CD4-positive, alpha-beta T cell (primary cell): ENCODE measurements at regions of chr7 and their contacts with region 1.

Region 1: DNA sequence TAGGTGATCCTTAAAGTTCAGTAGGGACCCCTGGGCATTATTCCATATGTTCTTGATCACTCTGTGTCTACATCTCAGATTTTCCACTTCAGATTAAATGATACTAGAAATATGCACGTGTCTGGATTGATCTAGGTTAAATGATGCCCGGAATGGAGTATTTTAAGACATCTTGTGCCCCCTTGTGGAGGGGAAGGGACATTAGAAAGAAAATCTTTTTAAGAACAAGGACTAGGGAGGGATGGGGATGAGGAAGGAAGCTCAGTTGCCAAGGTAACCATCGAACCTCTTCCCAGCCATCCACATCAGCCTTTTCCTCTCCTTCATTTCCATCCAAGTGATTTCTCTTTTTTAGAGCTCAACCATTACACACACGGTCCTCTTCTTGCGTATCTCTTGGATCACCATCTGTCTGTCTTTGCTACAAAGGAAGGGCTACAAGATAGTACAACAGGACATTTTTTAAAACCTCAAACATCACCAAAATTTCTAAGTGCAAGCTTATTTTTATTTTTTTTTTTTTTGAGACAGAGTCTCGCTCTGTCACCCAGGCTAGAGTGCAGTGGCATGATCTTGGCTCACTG is 40.5 kb downstream of the PRSS2 start:
- DNase-seq: peak in 4 of 14 experiments; percentile 59 to 87 (median 86)
- ATAC-seq: no peak
- H3K4me3 ChIP-seq: no peak overlapping the region
- H3K4me3 Mint-ChIP-seq: peak overlapping the region; percentile 62
- H3K27ac ChIP-seq: peak overlapping the region; percentile 95 to 99
- H3K27ac Mint-ChIP-seq: peak overlapping the region; percentile 98
- H3K4me1 ChIP-seq: peaks cover 77% of the 10 kb centered on the region
- H3K4me1 Mint-ChIP-seq: peaks cover 99% of the 10 kb centered on the region
- H3K27me3 ChIP-seq: no peaks in the 10 kb centered on the region
- H3K27me3 Mint-ChIP-seq: no peaks in the 10 kb centered on the region
- CTCF ChIP-seq: peak; percentile 78

Region 2: GRCh38 chr7:142301923-142302550 is 509.2 kb before region 1 on chr7:
- CTCF ChIA-PET with region 1: interaction called, 5 read pairs
- POLR2A ChIA-PET with region 1: interaction called, 87 read pairs
- intact Hi-C with region 1: loop called (anchors 5 kb)
- DNase-seq: peak in 3 of 14 experiments; percentile 29 to 38 (median 33)
- ATAC-seq: no peak
- H3K4me3 ChIP-seq: no peak overlapping the region
- H3K4me3 Mint-ChIP-seq: no peak overlapping the region
- H3K27ac ChIP-seq: no peak overlapping the region
- H3K27ac Mint-ChIP-seq: no peak overlapping the region
- H3K4me1 ChIP-seq: peaks cover 12% of the 10 kb centered on the region
- H3K4me1 Mint-ChIP-seq: peaks cover 40% of the 10 kb centered on the region
- H3K27me3 ChIP-seq: no peaks in the 10 kb centered on the region
- H3K27me3 Mint-ChIP-seq: peaks cover 24% of the 10 kb centered on the region
- CTCF ChIP-seq: peak; percentile 16

Region 3: DNA sequence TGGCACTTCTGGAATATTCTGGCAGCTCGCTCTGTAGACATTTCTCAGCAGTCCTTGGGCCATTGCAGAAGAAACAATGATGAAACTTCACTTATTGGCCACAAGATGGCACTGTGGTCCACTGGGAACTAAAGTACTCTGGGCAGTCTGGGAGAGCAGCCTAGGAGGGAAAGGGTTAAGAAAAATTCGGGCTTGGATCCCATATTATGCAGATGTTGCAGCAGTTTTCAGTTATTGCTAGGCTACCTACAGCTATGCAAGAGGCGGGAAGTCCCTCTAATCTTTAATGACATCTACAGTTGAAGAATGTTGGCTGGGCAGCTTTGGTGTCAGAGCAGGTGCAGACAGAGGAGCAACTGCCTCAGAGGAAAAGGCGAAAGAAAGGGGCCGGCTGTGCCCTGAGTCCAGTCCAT is 351.7 kb before region 1 on chr7:
- CTCF ChIA-PET with region 1: no interaction called
- POLR2A ChIA-PET with region 1: interaction called, 59 read pairs
- intact Hi-C with region 1: no loop called
- DNase-seq: peak in 4 of 14 experiments; percentile 49 to 77 (median 60)
- ATAC-seq: peak; percentile 56
- H3K4me3 ChIP-seq: no peak overlapping the region
- H3K4me3 Mint-ChIP-seq: peak overlapping the region; percentile 2
- H3K27ac ChIP-seq: no peak overlapping the region
- H3K27ac Mint-ChIP-seq: peak overlapping the region; percentile 67
- H3K4me1 ChIP-seq: peaks cover 54% of the 10 kb centered on the region
- H3K4me1 Mint-ChIP-seq: peaks cover 87% of the 10 kb centered on the region
- H3K27me3 ChIP-seq: no peaks in the 10 kb centered on the region
- H3K27me3 Mint-ChIP-seq: no peaks in the 10 kb centered on the region
- CTCF ChIP-seq: peak; percentile 74

Region 4: DNA sequence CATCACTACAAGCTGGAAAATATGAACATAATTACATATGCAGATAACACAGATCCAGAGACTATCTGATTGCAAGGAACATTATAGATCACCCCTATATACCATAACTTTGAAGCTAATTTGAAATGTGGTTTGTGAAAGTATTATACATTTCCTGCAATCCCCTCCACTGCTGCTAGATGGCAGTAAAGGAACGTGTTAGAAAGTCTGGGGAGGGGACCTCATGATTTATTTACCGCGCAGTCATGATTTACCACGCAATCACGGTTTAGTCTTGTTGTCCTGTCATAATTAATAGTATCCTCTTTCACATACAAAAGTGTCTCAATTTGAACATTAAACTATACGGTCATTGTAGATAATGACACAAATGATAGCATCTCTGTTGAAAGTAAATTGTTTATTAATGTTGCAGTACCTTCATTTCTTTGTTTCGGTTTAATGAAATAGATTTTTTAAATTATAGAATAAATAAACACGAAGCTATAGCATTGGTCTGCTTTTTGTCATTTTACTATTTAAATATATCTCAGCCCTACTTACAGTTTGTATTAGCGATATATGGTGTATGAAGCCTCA is 207.3 kb before region 1 on chr7:
- CTCF ChIA-PET with region 1: interaction called, 9 read pairs
- POLR2A ChIA-PET with region 1: interaction called, 60 read pairs
- intact Hi-C with region 1: loop called in 1 of 2 experiments (anchors 1 kb)
- DNase-seq: peak in 12 of 14 experiments; percentile 24 to 78 (median 42)
- ATAC-seq: peak; percentile 71
- H3K4me3 ChIP-seq: no peak overlapping the region
- H3K4me3 Mint-ChIP-seq: peak overlapping the region; percentile 58
- H3K27ac ChIP-seq: no peak overlapping the region
- H3K27ac Mint-ChIP-seq: peak overlapping the region; percentile 83
- H3K4me1 ChIP-seq: no peaks in the 10 kb centered on the region
- H3K4me1 Mint-ChIP-seq: peaks cover 7% of the 10 kb centered on the region
- H3K27me3 ChIP-seq: no peaks in the 10 kb centered on the region
- H3K27me3 Mint-ChIP-seq: no peaks in the 10 kb centered on the region
- CTCF ChIP-seq: peak; percentile 76

Region 5: GRCh38 chr7:142711746-142712619 is 99.3 kb before region 1 on chr7:
- CTCF ChIA-PET with region 1: interaction called, 7 read pairs
- POLR2A ChIA-PET with region 1: interaction called, 138 read pairs
- intact Hi-C with region 1: loop called in 1 of 2 experiments (anchors 2 kb)
- DNase-seq: peak in 8 of 14 experiments; percentile 9 to 66 (median 36)
- ATAC-seq: peak; percentile 56
- H3K4me3 ChIP-seq: peak overlapping the region; percentile 51
- H3K4me3 Mint-ChIP-seq: peak overlapping the region; percentile 84
- H3K27ac ChIP-seq: peak overlapping the region; percentile 40 to 53
- H3K27ac Mint-ChIP-seq: peak overlapping the region; percentile 80
- H3K4me1 ChIP-seq: peaks cover 44% of the 10 kb centered on the region
- H3K4me1 Mint-ChIP-seq: peaks cover 71% of the 10 kb centered on the region
- H3K27me3 ChIP-seq: no peaks in the 10 kb centered on the region
- H3K27me3 Mint-ChIP-seq: no peaks in the 10 kb centered on the region
- CTCF ChIP-seq: peak; percentile 52

Region 6: GRCh38 chr7:142754681-142755575 is 56.3 kb before region 1 on chr7:
- CTCF ChIA-PET with region 1: no interaction called
- POLR2A ChIA-PET with region 1: no interaction called
- intact Hi-C with region 1: no loop called
- DNase-seq: no peak
- ATAC-seq: no peak
- H3K4me3 ChIP-seq: no peak overlapping the region
- H3K4me3 Mint-ChIP-seq: no peak overlapping the region
- H3K27ac ChIP-seq: no peak overlapping the region
- H3K27ac Mint-ChIP-seq: no peak overlapping the region
- H3K4me1 ChIP-seq: no peaks in the 10 kb centered on the region
- H3K4me1 Mint-ChIP-seq: no peaks in the 10 kb centered on the region
- H3K27me3 ChIP-seq: no peaks in the 10 kb centered on the region
- H3K27me3 Mint-ChIP-seq: no peaks in the 10 kb centered on the region
- CTCF ChIP-seq: no peak

Region 7: GRCh38 chr7:142853739-142854371 is 42.6 kb after region 1 on chr7:
- CTCF ChIA-PET with region 1: interaction called, 11 read pairs
- POLR2A ChIA-PET with region 1: interaction called, 33 read pairs
- intact Hi-C with region 1: loop called in 1 of 2 experiments (anchors 5 kb)
- DNase-seq: peak; percentile 44 to 83 (median 60)
- ATAC-seq: peak; percentile 82
- H3K4me3 ChIP-seq: peak overlapping the region; percentile 87
- H3K4me3 Mint-ChIP-seq: peak overlapping the region; percentile 95
- H3K27ac ChIP-seq: peak overlapping the region; percentile 24 to 41
- H3K27ac Mint-ChIP-seq: peak overlapping the region; percentile 85
- H3K4me1 ChIP-seq: peaks cover 30% of the 10 kb centered on the region
- H3K4me1 Mint-ChIP-seq: peaks cover 52% of the 10 kb centered on the region
- H3K27me3 ChIP-seq: no peaks in the 10 kb centered on the region
- H3K27me3 Mint-ChIP-seq: no peaks in the 10 kb centered on the region
- CTCF ChIP-seq: peak; percentile 90

Region 8: GRCh38 chr7:143050931-143051330 is 239.7 kb after region 1 on chr7:
- CTCF ChIA-PET with region 1: no interaction called
- POLR2A ChIA-PET with region 1: no interaction called
- intact Hi-C with region 1: no loop called
- DNase-seq: no peak
- ATAC-seq: no peak
- H3K4me3 ChIP-seq: no peak overlapping the region
- H3K4me3 Mint-ChIP-seq: no peak overlapping the region
- H3K27ac ChIP-seq: no peak overlapping the region
- H3K27ac Mint-ChIP-seq: no peak overlapping the region
- H3K4me1 ChIP-seq: no peaks in the 10 kb centered on the region
- H3K4me1 Mint-ChIP-seq: no peaks in the 10 kb centered on the region
- H3K27me3 ChIP-seq: no peaks in the 10 kb centered on the region
- H3K27me3 Mint-ChIP-seq: peaks cover 4% of the 10 kb centered on the region
- CTCF ChIP-seq: no peak

Region 9: GRCh38 chr7:143408686-143409561 is 597.7 kb after region 1 on chr7 and contains the start of gene EPHA1:
- CTCF ChIA-PET with region 1: no interaction called
- POLR2A ChIA-PET with region 1: interaction called, 10 read pairs
- intact Hi-C with region 1: no loop called
- DNase-seq: peak; percentile 30 to 85 (median 50)
- ATAC-seq: peak; percentile 74
- H3K4me3 ChIP-seq: peak within 1 kb of the TSS; percentile 71
- H3K4me3 Mint-ChIP-seq: peak within 1 kb of the TSS; percentile 94
- H3K27ac ChIP-seq: peak within 1 kb of the TSS; percentile 13 to 38
- H3K27ac Mint-ChIP-seq: peak within 1 kb of the TSS; percentile 85
- H3K4me1 ChIP-seq: peaks cover 55% of the 10 kb centered on the region
- H3K4me1 Mint-ChIP-seq: peaks cover 87% of the 10 kb centered on the region
- H3K27me3 ChIP-seq: no peaks in the 10 kb centered on the region
- H3K27me3 Mint-ChIP-seq: no peaks in the 10 kb centered on the region
- CTCF ChIP-seq: peak; percentile 59
- total RNA-seq, gene EPHA1: 16.0 to 19.0 TPM